ENCODE measurements at regions of chr5 and their contacts with region 1.

Region 1: DNA sequence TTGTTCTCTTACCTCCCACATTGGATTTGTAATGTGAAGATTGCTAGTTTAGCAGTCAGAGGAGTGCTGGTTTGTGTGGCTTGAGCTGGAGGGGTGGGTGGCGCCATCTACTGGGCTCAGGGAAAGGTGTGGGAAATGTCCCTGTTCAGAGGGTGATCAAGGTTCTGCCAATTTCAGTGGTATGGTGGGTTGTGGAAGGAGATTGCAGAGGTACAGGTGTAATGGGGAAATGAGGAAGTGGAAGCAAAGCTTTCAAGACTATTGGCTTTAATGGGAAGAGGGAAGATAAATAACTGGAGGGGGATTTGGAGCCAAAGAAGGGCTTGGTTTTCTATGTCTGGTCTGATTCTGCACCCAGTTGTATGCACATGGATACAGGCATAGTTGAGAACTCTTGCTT is 76.4 kb downstream of the OSMR start:
- DNase-seq: peak; percentile 33
- H3K4me3 ChIP-seq: no peak overlapping the region
- H3K27ac ChIP-seq: no peak overlapping the region
- H3K4me1 ChIP-seq: no peaks in the 10 kb centered on the region
- H3K27me3 ChIP-seq: no peaks in the 10 kb centered on the region
- CTCF ChIP-seq: peak; percentile 91

Region 2: DNA sequence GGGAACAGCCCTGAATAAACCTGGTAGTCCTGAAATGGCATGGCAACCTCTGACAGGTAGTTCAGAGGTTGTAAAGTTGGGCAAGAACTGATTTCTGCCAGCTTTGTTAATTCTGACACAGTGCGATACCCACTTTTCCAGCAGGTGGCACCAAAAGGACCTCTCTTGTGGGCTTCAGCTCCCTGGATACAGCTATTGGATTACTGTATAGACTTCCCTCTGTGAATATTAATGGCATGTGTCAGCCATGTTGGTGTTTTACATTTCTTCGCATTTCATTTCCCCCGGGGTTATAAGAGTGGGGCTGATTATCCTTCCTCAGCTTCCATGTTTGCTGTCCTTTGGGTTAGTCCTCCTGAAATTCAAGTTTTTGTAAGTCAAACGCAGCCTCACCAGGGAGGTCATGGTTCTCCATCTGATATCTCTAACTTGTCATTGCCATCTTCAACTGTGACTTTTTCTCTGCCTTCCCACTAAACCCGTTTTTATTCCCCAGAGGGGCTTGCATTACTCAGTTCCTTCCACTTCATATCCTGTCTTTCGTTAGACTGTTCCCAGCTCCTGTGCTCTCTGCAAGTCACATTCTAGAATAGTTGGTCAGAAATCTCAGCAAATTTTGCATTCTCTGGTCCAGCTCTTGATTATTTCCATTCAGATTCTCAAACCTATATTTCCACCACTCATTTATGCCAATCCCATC is 501.4 kb before region 1 on chr5:
- CTCF ChIA-PET with region 1: no interaction called
- dilution Hi-C with region 1: no loop called
- in situ Hi-C with region 1: no loop called
- intact Hi-C with region 1: loop called (anchors 5 kb)
- DNase-seq: peak; percentile 57
- H3K4me3 ChIP-seq: no peak overlapping the region
- H3K27ac ChIP-seq: no peak overlapping the region
- H3K4me1 ChIP-seq: no peaks in the 10 kb centered on the region
- H3K27me3 ChIP-seq: no peaks in the 10 kb centered on the region
- CTCF ChIP-seq: peak; percentile 83 to 91

Region 3: GRCh38 chr5:38556599-38557305 is 365.4 kb before region 1 on chr5 and contains the start of gene LIFR:
- CTCF ChIA-PET with region 1: no interaction called
- dilution Hi-C with region 1: no loop called
- in situ Hi-C with region 1: no loop called
- intact Hi-C with region 1: loop called (anchors 10 kb)
- DNase-seq: peak; percentile 79
- H3K4me3 ChIP-seq: peak within 1 kb of the TSS; percentile 60 to 94 (median 89)
- H3K27ac ChIP-seq: peak within 1 kb of the TSS; percentile 64
- H3K4me1 ChIP-seq: peaks cover 11% of the 10 kb centered on the region
- H3K27me3 ChIP-seq: peaks cover 1% of the 10 kb centered on the region
- CTCF ChIP-seq: no peak
- total RNA-seq, gene LIFR: 4.4 to 26.3 TPM

Region 4: GRCh38 chr5:38666668-38667498 is 255.3 kb before region 1 on chr5:
- CTCF ChIA-PET with region 1: no interaction called
- dilution Hi-C with region 1: no loop called
- in situ Hi-C with region 1: no loop called
- intact Hi-C with region 1: no loop called
- DNase-seq: no peak
- H3K4me3 ChIP-seq: no peak overlapping the region
- H3K27ac ChIP-seq: no peak overlapping the region
- H3K4me1 ChIP-seq: no peaks in the 10 kb centered on the region
- H3K27me3 ChIP-seq: no peaks in the 10 kb centered on the region
- CTCF ChIP-seq: peak; percentile 59 to 63

Region 5: GRCh38 chr5:38800515-38800914 is 121.7 kb before region 1 on chr5:
- CTCF ChIA-PET with region 1: no interaction called
- dilution Hi-C with region 1: no loop called
- in situ Hi-C with region 1: no loop called
- intact Hi-C with region 1: no loop called
- DNase-seq: no peak
- H3K4me3 ChIP-seq: no peak overlapping the region
- H3K27ac ChIP-seq: no peak overlapping the region
- H3K4me1 ChIP-seq: no peaks in the 10 kb centered on the region
- H3K27me3 ChIP-seq: no peaks in the 10 kb centered on the region
- CTCF ChIP-seq: no peak

Region 6: GRCh38 chr5:38845526-38846378 is 76.4 kb before region 1 on chr5 and contains the start of gene OSMR:
- CTCF ChIA-PET with region 1: no interaction called
- dilution Hi-C with region 1: no loop called
- in situ Hi-C with region 1: no loop called
- intact Hi-C with region 1: loop called (anchors 1 kb)
- DNase-seq: peak; percentile 98
- H3K4me3 ChIP-seq: peak within 1 kb of the TSS; percentile 96 to 98 (median 97)
- H3K27ac ChIP-seq: peak within 1 kb of the TSS; percentile 100
- H3K4me1 ChIP-seq: peaks cover 17% of the 10 kb centered on the region
- H3K27me3 ChIP-seq: no peaks in the 10 kb centered on the region
- CTCF ChIP-seq: no peak
- total RNA-seq, gene OSMR: 97.7 to 111 TPM

Measured in mammary epithelial cell (primary cell).